Adrenal gland (tissue), 19 donors: ENCODE measurements at regions of chr3 and their contacts with region 1.

Region 1: DNA sequence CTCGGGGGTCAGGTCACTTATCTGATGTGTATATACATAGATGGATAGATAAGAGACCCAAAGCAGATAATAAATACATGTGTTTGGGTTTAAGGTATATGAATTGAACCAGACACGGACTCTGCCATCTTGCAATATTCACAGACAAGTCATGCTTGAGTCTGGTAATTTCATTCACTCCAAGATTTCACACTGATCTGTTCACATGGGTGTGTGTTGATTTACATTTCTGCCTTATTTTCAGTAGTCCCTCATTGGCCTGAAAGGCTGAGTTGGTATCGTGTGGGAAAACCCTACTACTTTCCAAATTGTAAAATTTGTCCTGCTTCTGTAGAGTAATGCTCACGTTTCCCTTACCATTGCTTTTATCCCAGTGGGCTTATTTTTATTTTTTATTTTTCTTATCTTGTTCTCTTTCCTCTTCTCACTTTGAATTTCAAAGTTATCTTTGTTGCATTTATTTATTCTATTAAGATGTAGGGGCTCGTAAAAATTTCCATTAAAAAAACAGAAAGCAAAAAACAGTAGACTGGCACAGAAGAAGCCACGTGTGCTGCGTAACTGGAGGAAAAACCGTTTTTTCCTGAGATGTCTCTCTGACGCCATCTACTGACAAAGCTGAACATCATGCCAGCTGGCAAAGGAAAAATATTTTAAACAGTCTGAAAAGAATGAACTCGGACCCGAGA is 10.8 kb upstream of the MFSD1 start:
- DNase-seq: peak in 5 of 7 donors; percentile 37 to 64 (median 53)
- H3K4me3 ChIP-seq: peak overlapping the region in 1 of 4 donors; percentile 45
- H3K27ac ChIP-seq: no peak overlapping the region
- H3K4me1 ChIP-seq: no peaks in the 10 kb centered on the region
- H3K27me3 ChIP-seq: no peaks in the 10 kb centered on the region
- CTCF ChIP-seq: peak; percentile 57 to 88 (median 82)
- POLR2A ChIP-seq: no peak

Region 2: GRCh38 chr3:158727206-158728060 is 63.6 kb before region 1 on chr3:
- intact Hi-C with region 1: loop called (anchors 2 to 5 kb)
- DNase-seq: peak; percentile 53 to 81 (median 65)
- H3K4me3 ChIP-seq: peak overlapping the region in 1 of 4 donors; percentile 32
- H3K27ac ChIP-seq: peak overlapping the region in 2 of 5 donors; percentile 24 to 86
- H3K4me1 ChIP-seq: peaks cover 14 to 69% of the 10 kb centered on the region in 2 donors
- H3K27me3 ChIP-seq: no peaks in the 10 kb centered on the region
- CTCF ChIP-seq: peak; percentile 84 to 95 (median 87)
- POLR2A ChIP-seq: no peak

Region 3: GRCh38 chr3:159062734-159063410 is 271.8 kb after region 1 on chr3:
- intact Hi-C with region 1: no loop called
- DNase-seq: no peak
- H3K4me3 ChIP-seq: no peak overlapping the region
- H3K27ac ChIP-seq: no peak overlapping the region
- H3K4me1 ChIP-seq: no peaks in the 10 kb centered on the region
- H3K27me3 ChIP-seq: no peaks in the 10 kb centered on the region
- CTCF ChIP-seq: no peak
- POLR2A ChIP-seq: no peak